Activated CD4-positive, alpha-beta memory T cell treated with anti-CD3 and anti-CD28 coated beads, Interleukin-2, amount 10 ng/mL, durations not matched to agents 7 days and 5 days (primary cell): ENCODE measurements at regions of chr3 and their contacts with region 1.

Region 1: DNA sequence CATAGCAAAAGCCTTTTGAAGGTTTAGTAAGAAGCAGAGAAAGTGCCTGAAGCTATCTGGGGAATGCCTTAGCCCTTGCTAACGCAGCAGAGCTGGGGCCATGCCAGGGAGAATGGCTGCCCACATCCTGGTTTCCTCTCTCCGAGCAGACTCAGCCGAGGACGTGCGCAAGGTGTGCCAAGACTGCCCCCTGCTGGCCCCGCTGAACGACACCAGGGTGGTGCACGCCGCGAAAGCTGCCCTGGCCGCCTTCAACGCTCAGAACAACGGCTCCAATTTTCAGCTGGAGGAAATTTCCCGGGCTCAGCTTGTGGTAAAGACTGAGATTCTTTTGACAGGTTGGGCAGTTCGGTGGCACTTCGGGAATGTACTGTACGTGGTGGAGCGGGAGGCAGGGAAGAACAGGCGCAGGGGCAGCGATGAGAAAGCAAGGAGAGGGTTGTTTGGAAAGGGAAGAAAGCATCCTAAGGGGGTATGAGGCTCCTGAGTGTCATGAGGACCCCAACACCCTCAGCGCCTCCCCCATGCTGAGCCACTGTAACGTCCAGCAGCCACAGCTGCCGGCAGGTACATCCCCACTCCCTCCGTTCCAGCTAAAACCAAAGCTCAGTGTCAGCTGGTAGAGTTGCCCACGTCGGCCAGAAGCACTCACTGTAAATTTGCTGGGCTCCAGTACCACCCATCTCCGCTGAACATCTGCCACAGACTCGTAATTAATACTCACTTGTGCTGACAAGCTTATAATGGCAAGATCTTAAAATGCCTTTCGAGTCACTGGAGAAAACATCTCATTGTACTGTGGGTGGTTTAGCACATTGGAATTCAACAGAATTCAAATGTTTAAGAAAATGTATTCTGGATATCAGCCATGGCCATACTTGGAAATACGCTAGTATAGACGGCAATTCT is 4.4 kb downstream of the AHSG start:
- DNase-seq: peak; percentile 87
- H3K4me3 Mint-ChIP-seq: peak overlapping the region; percentile 9
- H3K27ac Mint-ChIP-seq: no peak overlapping the region
- H3K4me1 Mint-ChIP-seq: peaks cover 24% of the 10 kb centered on the region
- H3K27me3 Mint-ChIP-seq: peaks cover 41% of the 10 kb centered on the region

Region 2: GRCh38 chr3:185983495-185984141 is 633.7 kb before region 1 on chr3:
- CTCF ChIA-PET with region 1: interaction called, 23 read pairs
- POLR2A ChIA-PET with region 1: no interaction called
- DNase-seq: peak; percentile 58
- H3K4me3 Mint-ChIP-seq: no peak overlapping the region
- H3K27ac Mint-ChIP-seq: no peak overlapping the region
- H3K4me1 Mint-ChIP-seq: peaks cover 4% of the 10 kb centered on the region
- H3K27me3 Mint-ChIP-seq: peaks cover 9% of the 10 kb centered on the region

Region 3: GRCh38 chr3:186287711-186288110 is 329.6 kb before region 1 on chr3:
- CTCF ChIA-PET with region 1: no interaction called
- POLR2A ChIA-PET with region 1: no interaction called
- DNase-seq: no peak
- H3K4me3 Mint-ChIP-seq: no peak overlapping the region
- H3K27ac Mint-ChIP-seq: no peak overlapping the region
- H3K4me1 Mint-ChIP-seq: no peaks in the 10 kb centered on the region
- H3K27me3 Mint-ChIP-seq: peaks cover 5% of the 10 kb centered on the region

Region 4: DNA sequence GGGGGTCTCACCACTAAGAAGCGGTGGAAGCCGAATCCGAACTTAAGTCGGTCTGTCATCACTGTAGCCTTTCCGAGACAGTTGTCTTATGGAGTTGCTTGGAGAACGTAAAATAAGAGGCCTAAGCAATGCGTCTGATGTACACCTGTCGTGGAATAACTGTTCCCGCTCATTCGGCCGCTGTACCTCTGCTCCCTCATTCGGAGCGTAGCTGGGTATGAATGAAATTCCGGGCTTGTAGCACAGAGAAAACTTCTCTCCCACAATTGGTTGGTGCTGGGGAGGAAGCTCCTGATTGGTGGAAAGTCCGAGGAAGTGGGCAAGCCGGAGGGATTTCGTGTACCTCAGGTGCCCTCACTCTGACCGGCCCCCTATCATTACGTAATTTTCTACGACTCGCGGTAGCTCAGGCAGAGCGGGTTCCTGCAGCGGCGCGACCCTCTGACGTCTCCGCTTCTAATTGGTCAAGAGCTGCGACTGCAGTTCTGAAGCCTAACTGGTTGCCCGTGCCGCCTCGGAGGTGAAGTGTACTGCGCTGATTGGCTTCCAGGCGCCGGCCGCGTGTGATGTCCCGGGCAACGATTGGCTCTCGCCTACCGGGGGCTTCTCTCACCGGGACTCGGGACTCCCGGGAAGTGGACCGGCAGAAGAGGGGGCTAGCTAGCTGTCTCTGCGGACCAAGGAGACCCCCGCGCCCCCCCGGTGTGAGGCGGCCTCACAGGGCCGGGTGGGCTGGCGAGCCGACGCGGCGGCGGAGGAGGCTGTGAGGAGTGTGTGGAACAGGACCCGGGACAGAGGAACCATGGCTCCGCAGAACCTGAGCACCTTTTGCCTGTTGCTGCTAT is 47.0 kb before region 1 on chr3 and contains the start of gene DNAJB11:
- CTCF ChIA-PET with region 1: interaction called, 25 read pairs
- POLR2A ChIA-PET with region 1: interaction called, 27 read pairs
- DNase-seq: peak; percentile 99
- H3K4me3 Mint-ChIP-seq: peak within 1 kb of the TSS; percentile 96
- H3K27ac Mint-ChIP-seq: peak within 1 kb of the TSS; percentile 92
- H3K4me1 Mint-ChIP-seq: peaks cover 62% of the 10 kb centered on the region
- H3K27me3 Mint-ChIP-seq: no peaks in the 10 kb centered on the region
- total RNA-seq, gene DNAJB11: 50.7 to 55.7 TPM

Region 5: GRCh38 chr3:186598108-186598784 is 19.0 kb before region 1 on chr3:
- CTCF ChIA-PET with region 1: interaction called, 38 read pairs
- POLR2A ChIA-PET with region 1: interaction called, 3 read pairs
- DNase-seq: no peak
- H3K4me3 Mint-ChIP-seq: no peak overlapping the region
- H3K27ac Mint-ChIP-seq: no peak overlapping the region
- H3K4me1 Mint-ChIP-seq: no peaks in the 10 kb centered on the region
- H3K27me3 Mint-ChIP-seq: peaks cover 6% of the 10 kb centered on the region

Region 6: DNA sequence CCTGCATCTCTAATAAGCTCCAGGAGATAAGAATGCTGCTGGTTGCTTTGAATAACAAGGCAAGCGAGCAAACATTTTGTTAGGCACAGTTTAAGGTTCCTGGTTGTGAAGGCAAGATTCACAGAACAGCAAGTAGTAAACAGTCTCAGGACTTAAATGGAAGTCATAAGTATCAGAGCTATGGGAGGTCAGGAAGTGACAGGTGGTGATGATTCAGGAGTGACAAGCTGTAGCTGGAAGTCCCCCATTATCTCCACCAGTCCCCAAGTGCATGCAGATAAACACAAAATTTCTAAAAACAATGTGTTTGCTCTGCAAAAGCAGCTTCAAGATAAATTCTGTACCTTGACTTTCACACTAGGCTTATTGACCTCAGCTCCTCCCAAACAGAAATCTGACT is 26.2 kb after region 1 on chr3:
- CTCF ChIA-PET with region 1: interaction called, 10 read pairs
- POLR2A ChIA-PET with region 1: interaction called, 3 read pairs
- DNase-seq: no peak
- H3K4me3 Mint-ChIP-seq: no peak overlapping the region
- H3K27ac Mint-ChIP-seq: no peak overlapping the region
- H3K4me1 Mint-ChIP-seq: peaks cover 24% of the 10 kb centered on the region
- H3K27me3 Mint-ChIP-seq: peaks cover 5% of the 10 kb centered on the region

Region 7: DNA sequence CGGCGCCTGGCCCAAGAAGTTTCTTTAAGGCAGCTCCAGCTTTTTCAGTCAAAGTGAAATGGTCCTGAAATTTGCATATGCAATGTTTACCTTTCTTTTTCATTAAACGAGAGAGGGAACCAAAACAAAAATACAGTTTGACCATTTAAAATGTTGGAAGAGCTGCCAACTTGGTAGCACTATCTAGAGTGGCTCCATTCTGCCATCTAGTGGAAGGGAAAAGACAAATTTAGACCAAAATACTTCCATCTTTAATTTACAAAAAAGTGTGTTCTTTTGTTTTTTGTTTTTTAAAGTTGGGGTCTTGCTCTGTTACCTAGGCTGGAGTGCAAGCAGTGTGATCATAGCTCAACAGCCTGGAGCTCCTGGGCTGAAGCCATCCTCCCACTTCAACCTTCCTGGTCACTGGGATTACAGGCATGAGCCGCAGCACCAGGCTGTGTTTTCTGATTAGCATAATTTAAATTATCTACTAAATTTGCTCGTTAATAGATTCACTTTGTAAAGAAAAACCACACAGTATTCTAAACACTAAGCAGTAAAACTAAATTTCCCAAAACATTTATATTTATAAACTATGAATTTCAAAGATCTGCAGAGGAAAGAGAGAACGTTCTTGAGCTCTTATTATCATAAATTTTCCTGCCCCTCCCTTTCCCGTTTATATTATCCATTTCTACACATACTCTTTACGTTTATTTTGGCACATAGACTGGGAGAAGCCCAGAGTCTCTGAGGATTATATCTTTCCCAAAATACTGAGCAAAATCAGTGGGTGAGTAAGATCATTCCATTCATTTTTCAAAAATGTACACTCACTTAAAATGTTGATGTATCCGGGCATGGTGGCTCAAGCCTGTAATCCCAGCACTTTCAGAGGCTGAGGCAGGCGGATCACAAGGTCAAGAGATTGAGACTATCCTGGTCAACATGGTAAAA is 204.4 kb after region 1 on chr3:
- CTCF ChIA-PET with region 1: interaction called, 117 read pairs
- POLR2A ChIA-PET with region 1: interaction called, 7 read pairs
- DNase-seq: no peak
- H3K4me3 Mint-ChIP-seq: no peak overlapping the region
- H3K27ac Mint-ChIP-seq: no peak overlapping the region
- H3K4me1 Mint-ChIP-seq: peaks cover 22% of the 10 kb centered on the region
- H3K27me3 Mint-ChIP-seq: no peaks in the 10 kb centered on the region

Region 8: DNA sequence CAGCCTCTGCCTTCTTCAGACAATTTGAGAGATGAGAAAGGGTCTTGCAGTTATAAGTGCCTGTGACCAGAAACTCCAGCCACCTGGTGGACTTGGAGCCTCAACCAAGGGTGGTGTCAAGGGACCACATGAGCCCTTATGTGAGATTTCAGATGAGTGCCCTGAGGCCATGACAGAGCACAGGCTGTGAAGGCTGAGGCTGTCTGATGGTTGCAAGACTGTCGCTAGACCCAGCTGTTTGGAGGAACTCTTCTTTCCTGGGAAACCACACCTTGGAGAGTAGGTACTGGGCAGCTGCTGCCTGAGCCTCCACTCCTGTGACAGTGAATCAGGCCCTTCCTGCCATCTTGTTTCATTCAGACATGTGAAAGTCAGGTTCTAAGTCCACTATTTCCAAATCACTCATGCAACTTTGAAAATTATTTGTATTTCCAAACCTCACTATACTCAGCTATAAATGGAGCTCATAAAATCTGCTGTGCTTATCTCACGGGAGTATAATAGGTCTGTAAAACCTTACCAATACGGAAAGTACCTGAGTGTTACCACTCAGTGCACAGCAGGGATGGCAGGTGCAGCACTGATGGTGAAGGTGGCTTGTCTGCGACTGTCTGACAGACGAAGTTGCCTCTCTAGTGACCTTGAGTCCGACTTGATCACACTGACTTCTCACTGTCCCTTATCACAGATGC is 422.6 kb after region 1 on chr3:
- CTCF ChIA-PET with region 1: no interaction called
- POLR2A ChIA-PET with region 1: no interaction called
- DNase-seq: no peak
- H3K4me3 Mint-ChIP-seq: no peak overlapping the region
- H3K27ac Mint-ChIP-seq: peak overlapping the region; percentile 98
- H3K4me1 Mint-ChIP-seq: peaks cover 64% of the 10 kb centered on the region
- H3K27me3 Mint-ChIP-seq: no peaks in the 10 kb centered on the region

Region 9: DNA sequence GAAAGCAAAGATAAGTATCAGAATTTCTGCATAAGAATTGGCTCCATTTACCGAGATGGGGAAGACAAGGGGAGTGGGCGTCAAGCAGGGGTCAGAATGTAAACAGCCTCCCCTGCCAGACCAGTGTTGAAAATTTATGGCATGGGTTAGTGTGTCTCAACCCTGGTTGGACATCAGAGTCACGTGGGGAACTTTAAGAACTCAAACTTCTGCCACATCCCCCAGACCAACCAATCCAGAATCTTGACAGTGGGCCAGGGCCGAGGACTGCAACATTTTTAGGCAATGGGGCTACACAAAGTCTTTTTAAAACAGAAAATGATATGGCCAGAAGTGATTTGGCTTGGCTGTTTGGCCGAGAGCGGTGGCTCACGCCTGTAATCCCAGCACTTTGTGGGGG is 688.6 kb after region 1 on chr3:
- CTCF ChIA-PET with region 1: no interaction called
- POLR2A ChIA-PET with region 1: no interaction called
- DNase-seq: no peak
- H3K4me3 Mint-ChIP-seq: no peak overlapping the region
- H3K27ac Mint-ChIP-seq: no peak overlapping the region
- H3K4me1 Mint-ChIP-seq: no peaks in the 10 kb centered on the region
- H3K27me3 Mint-ChIP-seq: peaks cover 40% of the 10 kb centered on the region